ENCODE measurements at regions of chr13 and their contacts with region 1.

Region 1: DNA sequence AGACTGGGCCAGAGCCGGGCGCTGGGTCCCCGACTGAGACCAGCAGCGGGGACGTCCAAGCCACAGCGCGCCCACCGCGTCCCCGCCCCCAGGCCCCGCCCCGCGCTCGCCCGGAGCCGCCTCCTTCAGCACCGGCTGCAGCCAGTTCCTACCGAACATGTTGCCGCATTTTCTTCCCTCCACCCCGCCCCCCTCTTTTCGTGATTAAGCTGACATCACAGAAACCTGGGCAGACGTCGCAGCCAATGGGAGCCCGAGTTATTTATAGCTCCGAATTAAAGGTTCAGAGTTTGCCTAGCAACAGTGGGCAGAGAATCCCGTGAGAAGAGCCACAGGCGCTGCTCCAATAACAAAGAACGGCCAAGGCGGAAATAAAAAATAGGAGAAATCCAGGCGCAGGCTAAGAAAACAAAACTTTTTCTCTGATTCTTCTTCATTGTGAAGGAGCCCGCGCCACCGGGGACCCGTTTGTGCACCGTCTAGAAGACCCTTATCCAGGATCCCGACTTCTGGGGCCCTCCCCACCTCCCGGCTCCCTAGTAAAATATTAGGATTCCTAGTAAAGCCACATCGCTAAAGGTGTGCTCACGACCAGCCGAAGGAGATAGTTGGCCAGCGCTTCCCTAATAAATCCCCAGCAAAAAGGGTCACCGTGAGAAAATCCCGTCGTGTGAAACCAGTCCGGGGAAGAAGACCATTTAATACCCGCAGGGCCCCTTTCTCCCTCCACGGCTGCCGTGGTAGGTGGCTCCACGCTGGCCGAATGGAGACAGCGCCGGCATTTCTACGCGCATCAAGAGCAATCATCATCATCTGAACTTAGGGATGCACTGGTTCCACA is 61.7 kb downstream of the SERP2 start:
- DNase-seq: peak; percentile 64
- H3K4me3 Mint-ChIP-seq: peak overlapping the region; percentile 76
- H3K27ac Mint-ChIP-seq: peak overlapping the region; percentile 9
- H3K4me1 Mint-ChIP-seq: peaks cover 17% of the 10 kb centered on the region
- H3K27me3 Mint-ChIP-seq: peaks cover 75% of the 10 kb centered on the region

Region 2: DNA sequence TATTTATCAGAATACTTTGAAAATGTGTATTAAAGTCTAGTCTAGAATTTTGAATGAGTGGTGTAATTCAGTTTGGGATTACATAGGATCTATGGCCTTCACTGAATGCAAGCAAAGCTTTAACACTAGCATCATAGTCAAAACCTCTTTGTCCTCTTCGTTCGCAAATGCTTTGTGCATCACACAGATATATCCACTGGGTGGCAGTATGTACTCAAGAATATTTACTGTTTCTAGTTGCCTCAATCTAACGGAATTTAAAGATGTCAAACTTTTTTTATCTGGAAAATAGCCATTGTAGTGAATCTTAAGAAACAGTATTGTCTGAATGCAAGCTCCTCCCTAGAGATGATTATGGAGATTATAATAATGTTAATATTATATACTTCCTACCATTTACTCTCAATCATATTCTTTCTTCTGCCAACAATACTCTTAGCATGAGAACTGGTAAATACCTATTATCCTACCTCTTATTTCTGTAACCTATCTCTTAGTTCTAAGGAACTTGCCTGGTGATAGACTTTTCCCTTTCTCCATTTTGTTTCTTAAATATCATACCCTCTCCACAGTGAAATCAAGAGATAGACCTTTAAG is 529.8 kb before region 1 on chr13:
- intact Hi-C with region 1: loop called (anchors 1 kb)
- DNase-seq: no peak
- H3K4me3 Mint-ChIP-seq: no peak overlapping the region
- H3K27ac Mint-ChIP-seq: no peak overlapping the region
- H3K4me1 Mint-ChIP-seq: no peaks in the 10 kb centered on the region
- H3K27me3 Mint-ChIP-seq: peaks cover 24% of the 10 kb centered on the region

Region 3: GRCh38 chr13:44050450-44051063 is 384.8 kb before region 1 on chr13:
- intact Hi-C with region 1: loop called (anchors 1 kb)
- DNase-seq: no peak
- H3K4me3 Mint-ChIP-seq: no peak overlapping the region
- H3K27ac Mint-ChIP-seq: no peak overlapping the region
- H3K4me1 Mint-ChIP-seq: peaks cover 2% of the 10 kb centered on the region
- H3K27me3 Mint-ChIP-seq: peaks cover 29% of the 10 kb centered on the region

Region 4: GRCh38 chr13:44141725-44142539 is 293.4 kb before region 1 on chr13:
- intact Hi-C with region 1: loop called (anchors 5 kb)
- DNase-seq: peak; percentile 93
- H3K4me3 Mint-ChIP-seq: peak overlapping the region; percentile 84
- H3K27ac Mint-ChIP-seq: peak overlapping the region; percentile 67
- H3K4me1 Mint-ChIP-seq: peaks cover 24% of the 10 kb centered on the region
- H3K27me3 Mint-ChIP-seq: peaks cover 51% of the 10 kb centered on the region

Region 5: GRCh38 chr13:44191504-44192171 is 243.7 kb before region 1 on chr13:
- intact Hi-C with region 1: loop called (anchors 1 kb)
- DNase-seq: no peak
- H3K4me3 Mint-ChIP-seq: no peak overlapping the region
- H3K27ac Mint-ChIP-seq: no peak overlapping the region
- H3K4me1 Mint-ChIP-seq: peaks cover 13% of the 10 kb centered on the region
- H3K27me3 Mint-ChIP-seq: peaks cover 70% of the 10 kb centered on the region

Region 6: DNA sequence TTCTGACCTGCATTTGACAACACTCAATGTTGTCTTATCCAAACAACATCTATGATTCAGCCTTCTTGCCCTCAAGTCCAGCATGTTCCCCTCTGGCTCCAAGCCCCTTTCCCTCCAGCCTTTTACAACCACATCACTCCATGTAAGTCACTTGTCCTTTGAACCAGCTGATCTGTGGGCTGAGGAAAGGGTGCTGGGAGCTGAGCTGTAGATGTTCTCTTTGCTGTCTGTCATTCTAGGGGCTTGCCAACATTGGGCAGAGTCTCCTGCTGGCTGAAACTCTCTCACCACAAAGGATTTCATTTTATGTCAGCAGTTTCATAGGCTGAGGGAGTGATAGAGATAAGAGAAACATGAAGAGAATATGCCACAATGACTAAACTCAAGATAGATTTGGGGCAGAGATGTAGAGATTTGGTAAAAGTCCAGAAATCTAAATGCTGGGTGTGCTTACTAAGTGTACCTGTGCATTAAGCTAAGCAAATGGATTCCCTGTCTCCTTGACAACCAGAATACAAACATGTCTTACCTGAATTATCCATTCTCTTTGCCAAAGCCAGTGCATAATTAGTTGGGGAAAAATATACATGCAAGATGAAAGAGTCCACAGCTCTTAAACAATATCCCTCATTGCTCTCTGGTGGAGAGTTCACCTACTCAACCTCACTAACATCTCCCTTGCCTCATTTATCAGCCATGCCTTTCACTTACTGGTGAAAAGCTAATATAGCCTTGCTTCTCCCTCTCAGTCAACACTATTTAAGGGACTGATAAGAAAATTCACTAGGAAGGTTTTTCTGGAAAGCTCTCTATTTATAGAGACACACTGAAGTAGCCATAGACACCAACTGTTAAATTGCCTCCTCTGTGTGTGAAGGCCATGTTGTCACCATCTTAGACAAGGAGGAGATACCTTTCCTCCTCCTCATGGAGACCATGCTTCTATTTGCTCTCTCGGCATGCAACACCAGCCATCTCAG is 237.3 kb before region 1 on chr13:
- intact Hi-C with region 1: loop called (anchors 2 kb)
- DNase-seq: peak; percentile 34
- H3K4me3 Mint-ChIP-seq: no peak overlapping the region
- H3K27ac Mint-ChIP-seq: no peak overlapping the region
- H3K4me1 Mint-ChIP-seq: peaks cover 32% of the 10 kb centered on the region
- H3K27me3 Mint-ChIP-seq: peaks cover 62% of the 10 kb centered on the region

Region 7: GRCh38 chr13:44243198-44243857 is 192.0 kb before region 1 on chr13:
- intact Hi-C with region 1: loop called (anchors 1 kb)
- DNase-seq: no peak
- H3K4me3 Mint-ChIP-seq: no peak overlapping the region
- H3K27ac Mint-ChIP-seq: no peak overlapping the region
- H3K4me1 Mint-ChIP-seq: no peaks in the 10 kb centered on the region
- H3K27me3 Mint-ChIP-seq: peaks cover 36% of the 10 kb centered on the region

Region 8: GRCh38 chr13:44364348-44365049 is 70.9 kb before region 1 on chr13:
- intact Hi-C with region 1: no loop called
- DNase-seq: no peak
- H3K4me3 Mint-ChIP-seq: no peak overlapping the region
- H3K27ac Mint-ChIP-seq: no peak overlapping the region
- H3K4me1 Mint-ChIP-seq: no peaks in the 10 kb centered on the region
- H3K27me3 Mint-ChIP-seq: peaks cover 12% of the 10 kb centered on the region

Region 9: GRCh38 chr13:44422755-44423532 is 12.4 kb before region 1 on chr13:
- intact Hi-C with region 1: no loop called
- DNase-seq: no peak
- H3K4me3 Mint-ChIP-seq: no peak overlapping the region
- H3K27ac Mint-ChIP-seq: no peak overlapping the region
- H3K4me1 Mint-ChIP-seq: no peaks in the 10 kb centered on the region
- H3K27me3 Mint-ChIP-seq: peaks cover 19% of the 10 kb centered on the region

Region 10: GRCh38 chr13:44703371-44703770 is 268.0 kb after region 1 on chr13:
- intact Hi-C with region 1: no loop called
- DNase-seq: no peak
- H3K4me3 Mint-ChIP-seq: no peak overlapping the region
- H3K27ac Mint-ChIP-seq: no peak overlapping the region
- H3K4me1 Mint-ChIP-seq: no peaks in the 10 kb centered on the region
- H3K27me3 Mint-ChIP-seq: peaks cover 11% of the 10 kb centered on the region

Measured in activated T-helper 2 cell treated with anti-CD3 and anti-CD28 coated beads, Interferon-gamma antibody, Interleukin-2, Interleukin-4, amounts not matched to agents 10 μg/mL and 5 μg/mL and 100 μg/mL, durations not matched to agents 14 hours and 24 hours and 36 hours (primary cell).